Endothelial cell of umbilical vein (primary cell): ENCODE measurements at regions of chr1 and their contacts with region 1.

Region 1: DNA sequence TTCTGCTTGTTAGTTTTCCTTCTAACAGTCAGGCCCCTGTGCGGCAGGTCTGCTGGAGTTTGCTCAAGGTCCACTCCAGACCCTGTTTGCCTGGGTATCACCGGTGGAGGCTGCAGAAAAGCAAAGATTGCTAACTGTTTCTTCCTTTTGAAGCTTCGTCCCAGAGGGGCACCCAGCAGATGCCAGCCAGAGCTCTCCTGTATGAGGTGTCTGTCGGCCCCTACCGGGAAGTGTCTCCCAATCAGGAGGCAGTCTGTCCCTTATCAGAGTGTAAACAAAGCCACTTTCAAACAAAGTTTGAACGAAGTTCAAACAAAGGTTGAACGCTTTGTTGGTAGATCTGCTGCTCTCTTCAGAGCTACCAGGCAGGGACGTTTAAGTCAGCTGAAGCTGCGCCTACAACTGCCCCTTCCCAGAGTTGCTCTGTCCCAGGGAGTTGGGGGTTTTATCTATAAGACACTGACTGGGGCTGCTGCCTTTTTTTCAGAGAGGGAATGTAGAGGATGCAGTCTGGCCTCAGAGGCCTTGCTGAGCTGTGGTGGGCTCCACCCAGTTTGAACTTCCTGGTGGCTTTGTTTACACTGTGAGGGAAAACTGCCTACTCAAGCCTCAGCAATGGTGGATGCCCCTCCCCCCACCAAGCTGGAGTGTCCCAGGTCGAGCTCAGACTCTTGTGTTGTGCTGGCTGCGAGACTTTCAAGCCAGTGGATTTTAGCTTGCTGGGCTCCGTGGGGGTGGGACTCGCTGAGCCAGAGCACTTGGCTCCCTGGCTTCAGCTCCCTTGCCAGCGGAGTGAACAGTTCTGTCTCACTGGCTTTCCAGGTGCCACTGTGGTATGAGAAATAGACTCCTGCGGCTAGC is 401.8 kb downstream of the SRGAP2C start:
- DNase-seq: no peak
- H3K4me3 ChIP-seq: no peak overlapping the region
- H3K27ac ChIP-seq: peak overlapping the region; percentile 66
- H3K4me1 ChIP-seq: peaks cover 18% of the 10 kb centered on the region
- H3K27me3 ChIP-seq: no peaks in the 10 kb centered on the region
- CTCF ChIP-seq: no peak
- POLR2A ChIP-seq: no peak

Region 2: DNA sequence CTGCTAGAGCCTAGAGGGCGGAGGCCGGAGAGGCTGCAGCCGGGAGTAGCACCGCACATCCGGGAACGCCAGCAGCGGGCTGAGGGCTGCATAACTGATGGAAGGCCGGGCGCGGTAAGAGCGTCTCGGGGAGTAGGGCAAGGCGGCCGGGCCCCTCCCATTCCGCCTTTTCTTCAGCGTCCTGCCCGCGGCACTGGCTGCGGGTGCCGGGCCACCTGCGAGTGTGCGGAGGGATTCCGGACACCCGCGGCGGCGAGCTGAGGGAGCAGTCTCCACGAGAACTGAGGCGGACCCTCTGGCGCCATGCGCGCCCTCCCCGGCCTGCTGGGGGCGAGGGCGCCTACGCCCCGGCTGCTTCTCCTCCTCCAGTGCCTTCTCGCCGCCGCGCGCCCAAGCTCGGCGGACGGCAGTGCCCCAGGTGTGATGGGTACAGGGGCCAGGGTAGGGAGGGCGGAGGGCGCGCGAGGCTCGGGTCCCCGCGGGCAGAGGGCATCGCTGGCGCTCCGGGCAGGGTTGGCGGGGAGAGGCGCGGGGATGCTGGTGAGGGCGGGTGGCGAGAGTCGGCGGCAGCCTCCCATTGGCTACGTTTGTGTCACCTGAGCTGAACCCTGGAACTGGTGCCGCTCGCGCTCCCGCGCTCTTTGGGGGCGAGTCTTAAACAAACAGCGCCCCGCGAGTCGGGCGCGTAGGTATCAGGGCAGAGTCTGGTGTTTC is 67.4 kb before region 1 on chr1:
- CTCF ChIA-PET with region 1: no interaction called
- POLR2A ChIA-PET with region 1: no interaction called
- dilution Hi-C with region 1: no loop called
- intact Hi-C with region 1: loop called (anchors 10 kb)
- DNase-seq: peak; percentile 1
- H3K4me3 ChIP-seq: peak overlapping the region; percentile 23 to 31 (median 25)
- H3K27ac ChIP-seq: no peak overlapping the region
- H3K4me1 ChIP-seq: peaks cover 4% of the 10 kb centered on the region
- H3K27me3 ChIP-seq: peaks cover 9 to 11% of the 10 kb centered on the region in 2 experiments
- CTCF ChIP-seq: no peak
- POLR2A ChIP-seq: no peak